ENCODE measurements at regions of chr17 and their contacts with region 1.

Region 1: DNA sequence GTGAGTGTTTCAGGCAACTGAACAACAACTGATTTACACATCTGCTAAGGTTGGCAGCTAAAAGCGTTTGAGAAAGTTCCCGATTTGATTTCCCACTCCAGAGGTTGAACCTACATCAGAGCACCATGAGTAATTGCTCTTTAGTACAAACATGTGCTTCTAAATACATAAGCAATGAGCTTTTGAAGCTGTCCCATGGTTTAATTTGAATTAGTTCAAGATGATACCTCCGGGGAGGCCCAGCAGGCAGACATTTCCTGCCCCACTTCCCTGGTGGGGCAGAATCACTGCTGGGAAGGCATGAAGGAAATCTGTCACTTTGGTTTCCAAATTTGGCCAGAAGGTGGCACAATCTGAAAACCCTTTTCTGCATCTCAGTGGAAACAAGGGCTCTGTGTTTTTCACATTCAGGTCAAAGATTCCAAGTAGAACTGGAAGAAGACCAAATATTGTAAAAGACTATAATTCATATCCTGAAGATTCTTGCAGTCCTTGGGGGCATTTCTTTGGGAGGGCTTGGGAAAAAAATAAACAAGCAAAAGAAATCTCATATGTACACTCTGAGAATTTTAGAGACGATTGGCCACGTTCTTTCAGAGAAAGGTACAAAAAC is 176.2 kb upstream of the FAM20A start:
- DNase-seq: peak; percentile 41
- H3K4me3 Mint-ChIP-seq: no peak overlapping the region
- H3K27ac Mint-ChIP-seq: no peak overlapping the region
- H3K4me1 Mint-ChIP-seq: no peaks in the 10 kb centered on the region
- H3K27me3 Mint-ChIP-seq: peaks cover 8% of the 10 kb centered on the region

Region 2: DNA sequence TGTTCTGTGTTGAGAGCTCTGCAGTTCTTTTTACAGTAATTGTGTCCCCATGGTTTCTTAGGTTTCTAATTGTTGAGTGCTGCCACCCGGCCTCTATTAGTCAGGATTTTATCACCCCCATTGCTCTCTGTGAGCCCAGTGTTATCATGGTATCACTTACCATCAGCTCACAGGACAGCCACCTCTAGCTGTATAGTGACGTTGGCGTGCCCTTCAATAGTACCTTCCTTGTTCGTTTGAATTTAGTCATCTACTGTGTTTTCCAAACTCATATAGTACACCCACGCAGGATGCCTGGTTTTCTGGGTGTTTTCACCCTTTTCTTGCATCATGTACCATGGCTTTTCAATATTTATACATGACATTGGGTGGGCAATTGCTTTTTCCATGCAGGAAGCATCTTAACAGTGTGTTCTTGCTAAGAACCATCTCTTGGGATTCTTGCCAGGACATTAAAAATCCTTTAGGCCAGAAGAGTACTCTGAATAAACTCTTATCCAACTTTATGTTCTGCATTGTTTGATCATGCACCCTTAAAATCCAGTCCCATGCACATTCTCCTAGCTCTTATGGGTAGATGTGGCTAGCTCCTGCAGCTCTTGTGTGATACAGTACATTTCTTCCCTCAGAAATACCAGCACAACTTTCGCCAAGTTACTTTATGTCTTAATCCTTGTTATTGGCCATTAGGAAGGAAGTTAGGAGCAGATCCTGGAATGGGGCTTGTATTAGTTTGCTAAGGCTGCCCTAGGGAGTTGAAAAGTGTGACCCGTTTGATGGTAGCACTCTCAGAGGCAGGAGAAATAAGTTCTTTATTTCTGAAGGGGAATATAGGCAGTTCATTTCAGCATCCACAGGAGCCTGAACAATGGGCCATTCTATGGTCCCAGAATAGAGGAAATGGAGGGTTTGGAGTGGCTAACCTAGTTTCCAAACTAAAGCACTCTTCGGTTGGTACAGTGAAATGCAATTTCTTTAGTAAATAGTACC is 462.6 kb after region 1 on chr17:
- CTCF ChIA-PET with region 1: interaction called, 29 read pairs
- DNase-seq: no peak
- H3K4me3 Mint-ChIP-seq: no peak overlapping the region
- H3K27ac Mint-ChIP-seq: no peak overlapping the region
- H3K4me1 Mint-ChIP-seq: no peaks in the 10 kb centered on the region
- H3K27me3 Mint-ChIP-seq: peaks cover 4% of the 10 kb centered on the region

Region 3: DNA sequence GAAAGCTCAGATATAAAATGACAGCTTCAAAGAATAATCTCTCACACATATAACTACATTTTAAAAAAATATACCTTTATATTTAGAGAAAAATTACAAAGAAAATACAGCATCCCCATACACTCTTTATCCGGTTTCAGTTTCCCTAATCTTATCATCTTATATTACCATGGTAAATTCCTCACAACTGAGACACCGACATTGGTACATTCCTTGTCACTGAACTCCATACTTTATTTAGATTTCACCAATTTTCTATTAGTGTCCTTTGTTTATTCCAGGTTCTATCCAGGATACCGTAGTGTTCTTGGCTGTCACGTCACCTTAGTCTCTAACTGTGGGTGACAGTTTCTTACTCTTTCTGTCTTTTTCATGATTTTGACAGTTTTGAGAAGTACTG is 473.3 kb after region 1 on chr17:
- CTCF ChIA-PET with region 1: interaction called, 10 read pairs
- DNase-seq: no peak
- H3K4me3 Mint-ChIP-seq: no peak overlapping the region
- H3K27ac Mint-ChIP-seq: no peak overlapping the region
- H3K4me1 Mint-ChIP-seq: no peaks in the 10 kb centered on the region
- H3K27me3 Mint-ChIP-seq: no peaks in the 10 kb centered on the region